ENCODE measurements at regions of chr1 and their contacts with region 1.

Region 1: DNA sequence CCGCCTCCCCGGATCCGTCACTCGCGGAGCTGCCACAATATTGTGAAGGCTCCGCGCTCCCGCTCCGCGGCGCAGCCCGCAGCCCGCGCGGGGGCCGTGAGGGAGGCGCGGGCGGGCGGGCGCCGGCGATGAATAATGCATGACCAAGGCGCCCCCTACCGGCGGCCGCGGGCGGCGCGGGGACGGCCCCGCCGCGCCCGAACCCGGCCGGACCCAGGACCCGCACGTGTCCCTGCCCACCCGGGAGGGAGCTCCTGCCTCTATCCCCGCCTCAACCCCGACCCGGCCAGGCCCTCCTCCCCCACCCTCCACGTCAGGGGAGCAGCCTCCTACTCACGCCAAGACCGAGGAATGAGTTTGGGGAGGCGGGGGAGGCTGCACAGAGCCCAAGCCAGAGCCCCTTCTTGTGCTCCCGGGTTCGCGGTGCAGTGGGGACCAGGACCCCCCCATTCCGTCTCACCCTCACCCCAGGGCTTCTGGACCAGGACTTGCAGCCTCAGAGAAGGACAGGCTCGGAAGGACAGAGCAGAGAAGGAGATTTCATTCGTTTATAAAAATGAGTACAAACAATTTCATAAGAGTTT is 70.8 kb upstream of the CASZ1 start:
- DNase-seq: peak; percentile 62
- H3K4me3 Mint-ChIP-seq: no peak overlapping the region
- H3K27ac Mint-ChIP-seq: no peak overlapping the region
- H3K4me1 Mint-ChIP-seq: peaks cover 6% of the 10 kb centered on the region
- H3K27me3 Mint-ChIP-seq: peaks cover 62% of the 10 kb centered on the region

Region 2: DNA sequence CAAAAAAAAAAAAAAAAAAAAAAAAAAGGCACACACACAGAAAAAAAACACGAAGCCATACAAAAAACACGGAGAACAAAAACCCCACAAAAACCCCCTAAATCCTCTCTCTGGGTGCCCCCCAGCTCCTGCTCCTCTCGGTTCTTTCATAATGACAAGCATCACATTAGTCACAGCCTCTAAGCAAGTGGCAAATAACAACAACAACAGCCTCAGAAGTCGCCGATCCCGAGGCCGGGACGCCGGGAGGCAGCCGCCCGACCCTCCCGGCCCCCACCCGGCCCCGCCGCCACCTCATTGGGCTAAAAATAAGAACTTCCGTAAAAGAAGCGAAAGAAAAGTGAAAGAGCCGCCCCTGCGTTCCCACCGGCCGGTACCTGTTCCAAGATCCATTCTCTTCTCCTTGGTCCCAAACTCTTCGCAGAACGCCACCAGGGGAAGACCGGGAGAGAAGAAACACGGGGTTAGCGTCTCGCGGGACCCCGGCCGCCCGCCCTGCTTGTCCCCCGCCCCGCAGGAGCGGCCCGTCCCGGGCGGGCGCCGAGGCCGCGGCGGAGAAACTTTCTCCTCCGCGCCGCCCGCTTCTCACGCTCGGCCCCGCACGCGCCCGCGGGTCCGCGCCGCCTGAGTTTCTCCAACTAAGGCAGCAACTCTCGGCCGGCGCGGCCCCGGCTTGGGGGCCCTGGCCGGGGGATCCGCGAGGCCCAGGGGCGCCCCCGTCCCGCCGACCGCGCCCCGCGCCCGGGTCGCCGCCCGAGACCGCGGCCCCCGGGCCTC is 173.5 kb before region 1 on chr1:
- CTCF ChIA-PET with region 1: interaction called, 10 read pairs
- POLR2A ChIA-PET with region 1: no interaction called
- DNase-seq: peak; percentile 50
- H3K4me3 Mint-ChIP-seq: peak overlapping the region; percentile 84
- H3K27ac Mint-ChIP-seq: peak overlapping the region; percentile 80
- H3K4me1 Mint-ChIP-seq: peaks cover 26% of the 10 kb centered on the region
- H3K27me3 Mint-ChIP-seq: peaks cover 19% of the 10 kb centered on the region